K562 (cell line): ENCODE measurements at regions of chr2 and their contacts with region 1.

Region 1: DNA sequence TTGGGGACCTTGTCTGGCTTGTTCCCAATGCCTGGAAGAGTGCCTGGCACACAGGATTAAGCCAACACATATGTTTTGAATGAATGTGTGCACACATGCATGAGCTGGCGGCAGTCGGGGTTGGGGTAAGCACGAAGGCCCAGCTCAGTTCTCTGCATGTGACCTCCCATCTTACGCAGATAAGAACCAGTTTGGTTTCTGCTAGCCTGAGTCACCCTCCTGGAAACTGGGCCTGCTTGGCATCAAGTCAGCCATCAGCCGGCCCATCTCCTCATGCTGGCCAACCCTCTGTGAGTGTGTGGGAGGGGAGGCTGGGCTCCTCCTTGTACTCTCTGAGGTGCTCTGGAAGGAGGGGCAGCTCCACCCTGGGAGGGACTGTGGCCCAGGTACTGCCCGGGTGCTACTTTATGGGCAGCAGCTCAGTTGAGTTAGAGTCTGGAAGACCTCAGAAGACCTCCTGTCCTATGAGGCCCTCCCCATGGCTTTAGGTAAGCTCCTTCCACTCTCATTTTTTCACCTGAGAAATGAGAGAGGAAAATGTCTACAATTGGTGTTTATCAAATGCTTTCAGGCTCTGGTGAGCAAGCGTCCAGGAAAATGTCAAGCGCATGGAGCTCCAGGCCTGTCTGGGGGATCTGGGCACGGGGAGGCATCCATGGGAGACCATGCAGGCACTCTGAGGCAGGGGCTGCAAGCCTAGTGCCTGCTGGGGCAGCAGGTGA is 9.7 kb upstream of the IL1RN start:
- DNase-seq: peak; percentile 21 to 62 (median 24)
- ATAC-seq: peak; percentile 78
- H3K4me3 ChIP-seq: no peak overlapping the region
- H3K27ac ChIP-seq: no peak overlapping the region
- H3K4me1 ChIP-seq: peaks cover 4 to 12% of the 10 kb centered on the region in 2 experiments; a peak in 3 of 5 replicates
- H3K27me3 ChIP-seq: peaks cover 4 to 16% of the 10 kb centered on the region in 2 experiments; a peak in 4 of 5 replicates
- CTCF ChIP-seq: no peak
- EP300 ChIP-seq: no peak
- POLR2A ChIP-seq: no peak
- RAD21 ChIP-seq: no peak

Region 2: DNA sequence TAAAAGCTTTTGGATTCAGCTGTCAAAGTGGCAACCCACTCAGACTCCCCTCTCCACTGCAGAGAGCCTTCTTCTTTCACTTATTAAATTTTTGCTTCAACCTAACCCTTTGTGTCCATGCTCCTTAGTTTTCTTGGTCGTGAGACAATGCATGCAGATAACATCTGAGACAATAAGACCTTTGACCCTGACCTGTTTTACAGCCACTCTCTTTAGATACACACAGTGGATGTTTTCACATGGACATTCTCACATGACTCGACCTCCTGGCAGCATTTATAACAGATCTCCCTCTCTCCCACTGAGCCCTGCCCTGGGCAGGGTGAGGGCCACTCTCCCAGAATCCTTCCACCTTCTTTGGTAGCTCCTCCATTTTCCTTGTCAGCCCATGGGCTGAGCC is 170.3 kb before region 1 on chr2:
- CTCF ChIA-PET with region 1: no interaction called
- POLR2A ChIA-PET with region 1: no interaction called
- in situ Hi-C with region 1: no loop called
- intact Hi-C with region 1: loop called (anchors 1 kb)
- DNase-seq: no peak
- ATAC-seq: no peak
- H3K4me3 ChIP-seq: no peak overlapping the region
- H3K27ac ChIP-seq: no peak overlapping the region
- H3K4me1 ChIP-seq: no peaks in the 10 kb centered on the region
- H3K27me3 ChIP-seq: peaks cover 2 to 12% of the 10 kb centered on the region in 2 experiments; a peak in 3 of 5 replicates
- CTCF ChIP-seq: no peak
- EP300 ChIP-seq: no peak
- POLR2A ChIP-seq: no peak
- RAD21 ChIP-seq: no peak

Region 3: DNA sequence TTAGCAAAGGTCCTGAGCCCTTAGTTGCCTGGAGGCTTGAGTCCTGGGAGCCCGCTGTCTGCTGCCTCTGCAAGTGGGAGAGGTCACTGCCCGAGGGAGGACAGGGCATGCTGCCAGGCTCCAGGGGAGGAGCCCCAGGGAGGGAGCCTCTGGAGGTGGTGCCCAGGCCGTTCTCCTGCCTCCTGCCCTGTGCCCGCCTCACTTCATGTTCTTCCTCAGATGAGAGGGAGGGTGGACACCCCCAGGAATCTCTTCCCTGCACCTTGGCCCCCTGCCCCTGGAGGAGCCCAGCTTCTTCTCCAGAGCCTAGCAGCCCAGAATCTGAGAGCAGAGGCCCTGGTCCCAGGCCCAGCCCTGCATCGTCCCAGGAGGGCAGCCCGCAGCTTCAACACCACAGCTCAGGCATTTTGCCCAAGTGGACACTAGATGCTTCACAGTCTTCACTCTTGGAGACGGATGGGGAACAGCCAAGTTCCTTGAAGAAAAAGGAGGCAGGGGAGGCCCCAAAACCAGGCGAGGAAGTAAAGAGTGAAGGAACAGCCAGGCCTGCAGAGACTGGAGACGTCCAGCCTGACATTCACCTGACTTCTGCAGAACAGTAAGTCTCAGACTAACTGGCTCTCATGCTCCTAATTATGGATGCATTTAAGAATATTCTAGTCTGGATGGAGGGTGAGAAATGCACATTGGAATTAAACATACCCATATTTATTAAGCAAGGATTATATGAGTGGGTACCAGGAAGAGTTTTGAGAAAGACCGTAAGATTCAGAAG is 68.1 kb after region 1 on chr2:
- CTCF ChIA-PET with region 1: no interaction called
- POLR2A ChIA-PET with region 1: no interaction called
- in situ Hi-C with region 1: no loop called
- intact Hi-C with region 1: no loop called
- DNase-seq: no peak
- ATAC-seq: no peak
- H3K4me3 ChIP-seq: no peak overlapping the region
- H3K27ac ChIP-seq: no peak overlapping the region
- H3K4me1 ChIP-seq: peaks cover 7 to 21% of the 10 kb centered on the region in 2 experiments; a peak in 4 of 5 replicates
- H3K27me3 ChIP-seq: no peaks in the 10 kb centered on the region
- CTCF ChIP-seq: no peak
- EP300 ChIP-seq: no peak
- POLR2A ChIP-seq: no peak
- RAD21 ChIP-seq: no peak